ENCODE measurements at regions of chr9 and their contacts with region 1.

Region 1: DNA sequence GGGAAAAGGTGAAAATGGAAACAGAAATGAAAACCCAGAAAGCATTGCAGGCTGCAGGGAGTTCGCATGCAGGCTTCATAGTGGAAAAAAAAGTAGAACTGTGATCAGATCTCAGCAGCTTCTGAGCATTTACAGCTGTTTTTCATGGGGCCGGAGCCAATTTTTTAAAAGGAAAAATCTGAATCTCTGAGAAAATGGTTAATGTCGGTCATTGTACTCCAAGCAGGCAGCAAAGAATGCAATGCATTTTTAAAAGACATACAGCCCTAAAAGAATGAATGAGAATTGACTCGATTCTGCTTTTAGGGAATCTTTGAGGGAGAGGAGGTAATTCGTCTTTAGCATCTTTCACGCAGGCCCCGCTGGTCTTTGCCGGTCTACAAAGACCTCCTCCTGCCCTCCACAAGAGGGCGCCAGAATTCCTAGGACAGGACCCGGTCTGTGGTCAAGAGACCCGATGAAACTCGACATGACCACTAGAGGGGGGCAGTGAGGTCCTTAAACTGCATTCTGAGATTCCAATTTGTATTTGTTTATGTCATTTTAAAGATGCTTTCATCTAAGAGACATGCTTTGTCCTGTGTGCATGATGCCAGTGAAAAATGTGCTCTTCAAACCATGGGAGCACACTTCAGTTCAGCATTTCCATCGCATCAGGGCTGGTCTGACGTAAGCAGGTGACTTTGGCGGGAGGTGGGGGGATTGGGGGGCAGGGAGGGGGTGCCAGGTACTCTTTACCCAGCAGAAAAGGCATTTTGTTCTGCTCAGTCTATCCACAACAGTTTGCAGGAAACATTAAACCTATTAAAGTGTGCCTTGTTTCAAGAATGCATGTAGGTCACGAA is 43.7 kb upstream of the TMEM252 start:
- DNase-seq: peak; percentile 74
- H3K4me3 Mint-ChIP-seq: no peak overlapping the region
- H3K27ac Mint-ChIP-seq: no peak overlapping the region
- H3K4me1 Mint-ChIP-seq: peaks cover 11% of the 10 kb centered on the region
- H3K27me3 Mint-ChIP-seq: peaks cover 6% of the 10 kb centered on the region

Region 2: DNA sequence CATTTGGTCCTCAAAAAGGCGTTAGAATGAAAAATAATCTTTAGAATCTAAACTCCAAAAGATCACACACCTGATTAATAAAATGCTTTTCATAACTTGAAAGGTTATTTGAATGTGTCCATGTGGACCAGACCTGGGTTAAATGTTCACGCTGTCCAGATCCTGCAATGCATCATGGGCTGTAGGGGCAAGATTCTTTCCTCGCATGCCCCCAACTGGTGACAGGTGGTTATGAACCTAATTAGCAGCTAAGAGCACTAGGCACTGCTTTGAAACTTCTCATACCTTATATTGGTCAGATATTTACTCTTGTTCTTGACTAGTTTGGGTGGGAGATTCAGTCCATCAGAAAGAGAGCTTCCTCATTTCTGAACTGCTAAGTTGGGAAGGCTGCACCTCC is 101.4 kb after region 1 on chr9:
- intact Hi-C with region 1: loop called (anchors 1 kb)
- DNase-seq: no peak
- H3K4me3 Mint-ChIP-seq: no peak overlapping the region
- H3K27ac Mint-ChIP-seq: no peak overlapping the region
- H3K4me1 Mint-ChIP-seq: peaks cover 11% of the 10 kb centered on the region
- H3K27me3 Mint-ChIP-seq: no peaks in the 10 kb centered on the region

Region 3: DNA sequence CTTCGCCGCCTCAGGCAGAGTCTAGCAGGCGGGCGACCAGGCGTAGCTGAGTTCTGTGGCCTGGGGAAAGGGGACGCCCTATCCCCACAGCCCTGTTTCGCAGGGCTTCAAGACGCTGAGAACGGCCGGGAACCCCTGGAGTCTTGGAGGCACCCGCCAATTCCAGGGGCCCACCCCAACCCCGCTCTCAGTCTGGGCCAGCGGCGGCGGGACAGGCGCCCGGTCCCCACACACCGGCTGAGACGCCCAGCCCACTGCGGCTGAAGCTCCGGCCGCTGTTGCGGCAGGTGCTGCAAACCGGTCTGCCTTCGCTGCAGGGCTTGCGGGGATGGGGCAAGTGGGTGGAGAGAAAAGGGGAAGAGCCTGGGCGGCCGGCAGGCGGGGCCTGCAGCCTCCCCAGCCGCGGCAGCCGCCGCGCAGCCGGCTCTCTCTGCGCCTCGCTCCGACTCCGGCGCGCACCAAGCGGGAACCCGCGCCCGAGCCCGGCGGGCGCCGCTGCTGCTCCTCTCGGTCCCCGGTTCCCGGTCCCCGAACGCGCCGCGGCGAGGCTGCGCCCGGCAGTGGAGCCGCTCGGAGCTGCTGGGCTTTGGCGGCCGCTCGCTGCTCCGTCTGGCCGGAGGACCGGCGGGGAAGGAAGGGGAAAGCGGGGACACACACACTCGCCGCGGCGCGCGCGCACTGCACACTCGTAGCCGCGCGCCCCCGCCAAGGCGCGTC is 120.6 kb after region 1 on chr9 and contains the start of gene PIP5K1B:
- intact Hi-C with region 1: loop called (anchors 1 kb)
- DNase-seq: peak; percentile 44
- H3K4me3 Mint-ChIP-seq: peak within 1 kb of the TSS; percentile 85
- H3K27ac Mint-ChIP-seq: peak within 1 kb of the TSS; percentile 81
- H3K4me1 Mint-ChIP-seq: peaks cover 27% of the 10 kb centered on the region
- H3K27me3 Mint-ChIP-seq: peaks cover 57% of the 10 kb centered on the region
- total RNA-seq, gene PIP5K1B: 77.4 and 78.5 TPM in 2 replicates

Region 4: DNA sequence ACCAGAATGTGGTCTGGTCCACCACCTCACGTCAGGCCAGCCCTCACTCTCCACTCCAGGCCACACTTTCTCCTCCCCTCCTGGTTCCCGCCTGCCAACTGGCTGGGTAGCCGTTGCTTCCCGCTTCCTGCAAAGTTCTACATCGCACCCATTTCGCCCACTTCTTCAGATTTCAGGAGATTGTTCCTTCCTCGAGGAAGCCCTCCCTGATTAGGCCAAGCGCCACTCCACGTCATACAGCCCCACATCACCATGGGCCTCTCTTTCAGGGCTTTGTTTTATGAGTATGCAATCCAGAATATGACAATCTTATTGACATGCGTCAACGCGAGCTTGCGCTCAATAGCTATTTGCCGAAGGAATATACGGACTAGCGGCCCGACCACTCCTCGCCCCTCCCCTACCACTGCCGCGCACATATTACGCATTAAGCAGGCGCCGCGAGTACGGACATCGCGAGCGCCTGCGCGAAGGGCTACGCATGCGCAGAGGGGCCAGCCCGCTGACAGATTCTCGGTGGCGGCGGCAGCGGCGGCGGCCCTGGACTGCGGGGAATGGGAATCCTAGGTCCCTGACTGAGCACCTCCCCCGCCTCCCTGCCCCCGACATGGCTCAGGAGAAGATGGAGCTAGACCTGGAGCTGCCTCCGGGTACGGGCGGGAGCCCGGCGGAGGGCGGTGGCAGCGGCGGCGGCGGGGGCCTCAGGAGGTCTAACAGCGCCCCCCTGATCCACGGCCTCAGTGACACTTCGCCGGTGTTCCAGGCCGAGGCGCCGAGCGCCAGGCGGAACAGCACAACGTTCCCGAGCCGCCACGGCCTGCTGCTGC is 195.4 kb after region 1 on chr9:
- intact Hi-C with region 1: loop called (anchors 1 kb)
- DNase-seq: peak; percentile 89
- H3K4me3 Mint-ChIP-seq: no peak overlapping the region
- H3K27ac Mint-ChIP-seq: no peak overlapping the region
- H3K4me1 Mint-ChIP-seq: peaks cover 4% of the 10 kb centered on the region
- H3K27me3 Mint-ChIP-seq: no peaks in the 10 kb centered on the region

Region 5: GRCh38 chr9:68844631-68845612 is 260.5 kb after region 1 on chr9:
- intact Hi-C with region 1: loop called (anchors 10 kb)
- DNase-seq: no peak
- H3K4me3 Mint-ChIP-seq: no peak overlapping the region
- H3K27ac Mint-ChIP-seq: peak overlapping the region; percentile 65
- H3K4me1 Mint-ChIP-seq: peaks cover 24% of the 10 kb centered on the region
- H3K27me3 Mint-ChIP-seq: no peaks in the 10 kb centered on the region

Region 6: DNA sequence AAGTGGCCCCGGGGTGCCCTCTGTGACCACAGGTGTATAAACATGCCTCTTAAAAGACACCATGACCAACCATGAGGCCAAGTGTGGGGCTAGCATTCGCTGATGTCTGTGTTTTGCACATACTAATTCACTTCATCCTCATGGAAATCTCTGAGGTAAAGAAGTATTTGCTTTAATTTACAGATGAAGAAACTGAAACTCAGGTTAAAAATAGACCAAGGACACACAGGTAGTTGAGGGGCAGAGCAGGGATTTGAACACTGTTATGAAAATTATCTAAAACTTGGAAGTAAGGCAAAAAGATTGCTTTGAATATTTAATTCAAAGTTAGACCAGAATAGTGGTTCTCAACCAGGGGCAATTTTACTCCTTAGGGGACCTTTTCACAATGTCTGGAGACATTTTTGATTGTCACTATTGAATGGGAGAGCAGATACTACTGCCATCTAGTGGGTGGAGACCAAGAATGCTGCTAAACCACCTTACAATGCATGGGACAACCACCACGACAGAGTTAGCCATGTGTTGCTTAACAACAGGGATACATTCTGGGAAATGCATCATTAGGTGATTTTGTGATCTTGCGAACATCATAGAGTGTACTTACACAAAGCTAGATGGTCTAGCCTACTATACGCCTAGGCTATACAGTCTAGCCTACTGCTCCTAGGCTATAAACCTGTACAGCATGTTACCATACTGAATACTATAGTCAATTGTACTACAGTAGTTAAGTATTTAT is 443.1 kb after region 1 on chr9:
- intact Hi-C with region 1: loop called (anchors 1 kb)
- DNase-seq: peak; percentile 32
- H3K4me3 Mint-ChIP-seq: no peak overlapping the region
- H3K27ac Mint-ChIP-seq: peak overlapping the region; percentile 18
- H3K4me1 Mint-ChIP-seq: peaks cover 51% of the 10 kb centered on the region
- H3K27me3 Mint-ChIP-seq: peaks cover 1% of the 10 kb centered on the region

Region 7: DNA sequence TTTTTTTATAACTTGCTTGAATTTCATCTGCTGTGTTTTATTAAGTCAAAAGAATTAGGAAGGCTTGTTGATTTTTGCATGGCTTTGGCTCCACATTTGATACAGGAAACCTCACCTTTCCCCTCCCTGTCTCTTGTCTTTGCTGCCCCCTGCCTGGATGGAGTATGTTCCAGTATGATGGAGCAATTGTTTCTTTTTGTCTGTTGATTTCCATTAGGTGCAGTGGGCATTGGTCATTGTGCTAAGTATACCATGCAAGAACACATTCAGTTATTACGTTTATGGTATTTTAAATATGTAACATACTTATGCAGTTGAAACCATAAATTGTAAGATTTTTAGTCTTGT is 609.2 kb after region 1 on chr9:
- intact Hi-C with region 1: loop called (anchors 1 kb)
- DNase-seq: no peak
- H3K4me3 Mint-ChIP-seq: no peak overlapping the region
- H3K27ac Mint-ChIP-seq: no peak overlapping the region
- H3K4me1 Mint-ChIP-seq: peaks cover 28% of the 10 kb centered on the region
- H3K27me3 Mint-ChIP-seq: peaks cover 1% of the 10 kb centered on the region

Measured in activated T-helper 1 cell treated with anti-CD3 and anti-CD28 coated beads, Interleukin-12 subunit alpha, Interleukin-12 subunit beta, Interleukin-2, Interleukin-4 antibody, amounts not matched to agents 30 ng/mL and 10 ng/mL and 1 ng/mL, durations not matched to agents 14 hours and 24 hours and 36 hours (primary cell).